PC-9 (cell line): ENCODE measurements at regions of chr7 and their contacts with region 1.

Region 1: DNA sequence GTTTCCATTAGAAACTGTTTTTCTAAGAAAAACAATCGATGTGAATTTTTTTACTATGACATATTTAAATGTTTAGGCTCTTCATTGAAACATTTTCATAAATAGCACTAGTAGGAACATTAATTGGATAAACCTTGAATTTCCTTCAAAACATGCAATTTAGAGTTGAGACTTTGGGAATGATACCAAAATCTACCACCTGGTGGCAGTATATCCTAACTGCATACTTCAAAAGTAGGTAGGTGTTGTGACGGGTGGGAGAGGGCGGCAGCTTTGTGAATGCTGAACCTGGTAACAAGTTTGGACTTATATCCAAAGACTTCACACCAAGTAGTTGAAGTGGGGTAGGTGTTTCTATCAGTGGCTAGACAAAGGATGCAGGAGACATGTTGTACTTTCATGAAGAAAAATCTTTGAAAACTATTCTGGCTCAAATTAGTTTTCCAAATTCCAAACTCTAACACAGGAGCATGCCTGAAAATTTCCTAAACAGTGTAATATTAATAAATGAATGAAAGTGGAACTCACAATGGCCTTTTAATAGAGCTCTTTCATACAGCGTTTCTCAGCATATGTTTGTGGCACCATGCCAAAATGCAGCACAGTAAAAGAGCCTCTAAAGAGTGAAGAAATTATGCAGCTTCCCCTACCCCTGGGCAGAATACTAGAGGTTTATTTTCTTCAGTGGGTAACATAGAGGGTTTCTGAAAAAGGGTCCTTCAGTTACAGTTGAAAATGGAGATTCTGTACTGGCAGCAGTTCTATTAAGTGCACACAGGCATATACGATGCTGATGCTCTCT is 201.0 kb upstream of the TPK1 start:
- DNase-seq: peak; percentile 11 to 43
- H3K4me3 ChIP-seq: no peak overlapping the region
- H3K27ac ChIP-seq: no peak overlapping the region
- H3K4me1 ChIP-seq: no peaks in the 10 kb centered on the region
- H3K27me3 ChIP-seq: no peaks in the 10 kb centered on the region
- CTCF ChIP-seq: peak; percentile 95

Region 2: GRCh38 chr7:144682581-144683280 is 354.1 kb before region 1 on chr7:
- CTCF ChIA-PET with region 1: no interaction called
- POLR2A ChIA-PET with region 1: no interaction called
- intact Hi-C with region 1: no loop called
- DNase-seq: no peak
- H3K4me3 ChIP-seq: no peak overlapping the region
- H3K27ac ChIP-seq: no peak overlapping the region
- H3K4me1 ChIP-seq: no peaks in the 10 kb centered on the region
- H3K27me3 ChIP-seq: no peaks in the 10 kb centered on the region
- CTCF ChIP-seq: no peak

Region 3: DNA sequence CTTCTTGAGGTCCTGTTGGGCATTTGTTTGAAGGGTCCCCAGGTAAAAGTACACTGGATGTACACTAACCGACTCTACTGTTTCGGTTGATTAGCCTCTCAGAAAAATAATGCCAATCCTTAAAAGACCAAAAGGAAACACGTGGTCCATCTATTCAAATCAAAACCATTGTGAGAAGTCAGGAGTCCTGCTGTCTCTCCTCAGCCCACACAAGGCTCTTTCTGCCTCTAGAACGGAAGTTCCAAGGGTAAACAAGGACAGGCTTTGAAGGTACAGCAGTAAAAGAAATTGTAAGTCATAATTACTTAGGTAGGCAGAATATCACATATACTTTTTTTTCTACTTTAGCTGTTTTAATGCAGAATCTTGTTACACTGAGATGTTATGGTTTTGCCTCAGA is 129.2 kb before region 1 on chr7:
- CTCF ChIA-PET with region 1: no interaction called
- POLR2A ChIA-PET with region 1: no interaction called
- intact Hi-C with region 1: no loop called
- DNase-seq: no peak
- H3K4me3 ChIP-seq: no peak overlapping the region
- H3K27ac ChIP-seq: no peak overlapping the region
- H3K4me1 ChIP-seq: no peaks in the 10 kb centered on the region
- H3K27me3 ChIP-seq: no peaks in the 10 kb centered on the region
- CTCF ChIP-seq: no peak

Region 4: DNA sequence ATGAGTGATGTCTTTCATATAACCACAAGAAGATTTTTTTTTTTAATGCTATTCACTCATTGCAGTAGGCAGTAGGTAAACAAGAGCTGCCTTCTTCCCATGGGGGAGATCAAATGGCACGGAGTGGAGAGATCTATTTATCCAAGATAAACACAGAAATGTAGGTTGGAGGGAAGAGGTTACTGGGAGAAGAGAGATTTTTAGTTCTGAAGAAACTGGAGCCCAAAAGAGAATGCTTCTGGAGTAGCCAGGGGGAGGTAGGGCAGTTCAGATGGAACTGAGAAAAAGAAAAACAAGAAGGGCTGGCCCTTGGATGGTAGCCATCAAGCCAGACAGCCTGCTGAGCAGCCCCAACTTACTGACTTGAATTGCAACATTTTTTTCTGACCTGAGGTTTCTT is 69.2 kb after region 1 on chr7:
- CTCF ChIA-PET with region 1: no interaction called
- POLR2A ChIA-PET with region 1: no interaction called
- intact Hi-C with region 1: no loop called
- DNase-seq: peak; percentile 6 to 47
- H3K4me3 ChIP-seq: no peak overlapping the region
- H3K27ac ChIP-seq: no peak overlapping the region
- H3K4me1 ChIP-seq: no peaks in the 10 kb centered on the region
- H3K27me3 ChIP-seq: no peaks in the 10 kb centered on the region
- CTCF ChIP-seq: no peak

Region 5: GRCh38 chr7:145718129-145718528 is 681.3 kb after region 1 on chr7:
- CTCF ChIA-PET with region 1: no interaction called
- POLR2A ChIA-PET with region 1: no interaction called
- intact Hi-C with region 1: no loop called
- DNase-seq: no peak
- H3K4me3 ChIP-seq: no peak overlapping the region
- H3K27ac ChIP-seq: no peak overlapping the region
- H3K4me1 ChIP-seq: no peaks in the 10 kb centered on the region
- H3K27me3 ChIP-seq: no peaks in the 10 kb centered on the region
- CTCF ChIP-seq: no peak

Region 6: GRCh38 chr7:145848691-145849090 is 811.9 kb after region 1 on chr7:
- CTCF ChIA-PET with region 1: no interaction called
- POLR2A ChIA-PET with region 1: no interaction called
- intact Hi-C with region 1: loop called (anchors 2 kb)
- DNase-seq: peak in 1 of 2 experiments; percentile 13
- H3K4me3 ChIP-seq: no peak overlapping the region
- H3K27ac ChIP-seq: no peak overlapping the region
- H3K4me1 ChIP-seq: no peaks in the 10 kb centered on the region
- H3K27me3 ChIP-seq: no peaks in the 10 kb centered on the region
- CTCF ChIP-seq: peak; percentile 74

Region 7: GRCh38 chr7:146090023-146090645 is 1053.3 kb after region 1 on chr7:
- CTCF ChIA-PET with region 1: no interaction called
- POLR2A ChIA-PET with region 1: no interaction called
- intact Hi-C with region 1: loop called (anchors 1 kb)
- DNase-seq: peak; percentile 15 to 49
- H3K4me3 ChIP-seq: no peak overlapping the region
- H3K27ac ChIP-seq: no peak overlapping the region
- H3K4me1 ChIP-seq: no peaks in the 10 kb centered on the region
- H3K27me3 ChIP-seq: no peaks in the 10 kb centered on the region
- CTCF ChIP-seq: peak; percentile 94